ENCODE measurements at regions of chr9 and their contacts with region 1.

Region 1: GRCh38 chr9:33510264-33511183 is 13.5 kb upstream of the ANKRD18B start:
- DNase-seq: peak in 1 of 2 experiments; percentile 71
- H3K4me3 ChIP-seq: peak overlapping the region; percentile 59 to 79 (median 67)
- H3K27ac ChIP-seq: no peak overlapping the region
- H3K4me1 ChIP-seq: no peaks in the 10 kb centered on the region
- H3K27me3 ChIP-seq: no peaks in the 10 kb centered on the region; a peak in 1 of 7 replicates
- CTCF ChIP-seq: no peak
- EP300 ChIP-seq: no peak
- POLR2A ChIP-seq: peak in 1 of 2 experiments; percentile 81; a peak in 2 of 3 replicates
- RAD21 ChIP-seq: no peak

Region 2: DNA sequence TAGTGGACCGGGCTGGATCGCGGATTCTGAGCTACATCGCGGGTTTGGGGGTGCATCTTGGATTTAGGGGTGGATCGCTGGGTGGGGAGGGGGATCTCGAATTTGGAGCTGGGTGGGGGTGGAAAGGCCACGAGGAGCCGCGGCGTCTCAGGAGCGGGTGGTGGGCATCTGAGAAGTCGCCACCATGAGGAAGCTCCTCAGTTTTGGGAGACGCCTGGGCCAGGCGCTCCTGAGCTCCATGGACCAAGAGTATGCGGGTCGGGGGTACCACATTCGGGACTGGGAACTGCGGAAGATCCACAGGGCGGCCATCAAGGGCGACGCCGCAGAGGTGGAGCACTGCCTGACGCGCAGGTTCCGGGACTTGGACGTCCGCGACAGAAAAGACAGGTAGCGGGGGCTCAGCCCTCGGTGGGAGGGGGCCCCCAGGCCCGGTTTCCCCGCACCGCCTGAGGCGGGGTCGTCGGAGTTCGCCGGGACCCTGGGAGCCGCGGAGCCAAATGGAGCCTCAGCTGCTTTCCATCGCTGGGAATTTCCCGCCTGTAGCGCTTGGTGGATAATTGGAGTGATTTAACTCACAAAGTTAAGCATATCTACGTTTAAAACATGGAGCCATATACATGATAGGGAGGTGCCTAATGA is 13.9 kb after region 1 on chr9:
- CTCF ChIA-PET with region 1: no interaction called
- POLR2A ChIA-PET with region 1: interaction called, 11 read pairs
- DNase-seq: peak in 1 of 2 experiments; percentile 58
- H3K4me3 ChIP-seq: peak overlapping the region; percentile 37 to 76 (median 70)
- H3K27ac ChIP-seq: no peak overlapping the region
- H3K4me1 ChIP-seq: no peaks in the 10 kb centered on the region
- H3K27me3 ChIP-seq: no peaks in the 10 kb centered on the region
- CTCF ChIP-seq: no peak
- EP300 ChIP-seq: no peak
- POLR2A ChIP-seq: no peak
- RAD21 ChIP-seq: no peak

Measured in H1 (cell line).